Dorsolateral prefrontal cortex (tissue), 120 donors: ENCODE measurements at regions of chr15 and their contacts with region 1.

Region 1: GRCh38 chr15:98779463-98780071 is 131.2 kb downstream of the IGF1R start:
- DNase-seq: peak; percentile 60 to 83 (median 76)
- H3K4me3 ChIP-seq: peak overlapping the region in 2 of 59 donors; percentile 7 to 33
- H3K27ac ChIP-seq: peak overlapping the region in 48 of 59 donors; percentile 1 to 95 (median 62)
- H3K27me3 ChIP-seq: no peaks in the 10 kb centered on the region
- CTCF ChIP-seq: peak; percentile 60 to 97 (median 90)

Region 2: DNA sequence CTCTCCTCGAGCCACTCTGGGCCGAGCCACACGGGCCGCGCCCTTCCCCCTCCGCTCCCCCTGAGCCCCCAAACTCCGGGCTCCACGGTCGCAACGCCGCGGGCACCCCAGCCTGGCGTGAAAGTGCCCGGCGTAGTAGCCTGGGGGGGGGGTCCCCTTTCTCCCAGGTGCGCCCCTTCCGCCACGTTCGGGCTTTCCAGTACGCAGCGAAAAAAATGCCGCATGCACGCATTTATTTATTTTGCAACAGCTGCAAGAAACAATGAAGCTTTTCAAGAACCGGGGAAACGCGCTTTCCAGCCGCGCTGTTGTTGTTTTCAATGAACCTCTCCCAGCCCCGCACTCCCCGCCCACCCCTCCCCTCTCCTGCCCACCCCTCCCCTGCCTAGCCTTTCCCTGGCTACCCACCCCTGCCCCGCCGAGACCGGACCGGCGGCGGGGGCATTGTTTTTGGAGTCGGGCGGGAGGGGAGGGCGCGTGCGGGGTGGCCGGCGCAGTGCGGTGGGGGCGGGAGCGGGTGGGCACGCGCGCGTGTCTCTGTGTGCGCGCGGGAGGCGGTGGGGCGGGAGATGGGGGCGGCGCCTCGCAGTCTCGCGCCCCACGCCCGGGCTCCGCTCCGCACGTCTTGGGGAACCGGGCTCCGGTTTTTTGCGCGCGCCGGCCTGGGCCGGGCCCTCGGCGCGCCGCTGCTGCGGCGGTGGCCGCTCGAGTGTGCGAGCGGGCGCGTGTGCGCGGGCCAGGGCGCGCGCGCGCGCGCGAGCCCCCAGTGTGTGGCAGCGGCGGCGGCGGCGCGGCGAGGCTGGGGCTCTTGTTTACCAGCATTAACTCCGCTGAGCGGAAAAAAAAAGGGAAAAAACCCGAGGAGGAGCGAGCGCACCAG is 131.6 kb before region 1 on chr15 and contains the start of gene IGF1R:
- intact Hi-C with region 1: loop called in 1 of 2 experiments (anchors 5 kb)
- DNase-seq: peak; percentile 70 to 89 (median 78)
- H3K4me3 ChIP-seq: peak within 1 kb of the TSS; percentile 73 to 98 (median 85)
- H3K27ac ChIP-seq: peak within 1 kb of the TSS; percentile 81 to 99 (median 94)
- H3K27me3 ChIP-seq: no peaks in the 10 kb centered on the region
- CTCF ChIP-seq: peak in 17 of 56 donors; percentile 4 to 47 (median 13)
- total RNA-seq, gene IGF1R: 53.3 to 130 (median 84.4) TPM

Region 3: DNA sequence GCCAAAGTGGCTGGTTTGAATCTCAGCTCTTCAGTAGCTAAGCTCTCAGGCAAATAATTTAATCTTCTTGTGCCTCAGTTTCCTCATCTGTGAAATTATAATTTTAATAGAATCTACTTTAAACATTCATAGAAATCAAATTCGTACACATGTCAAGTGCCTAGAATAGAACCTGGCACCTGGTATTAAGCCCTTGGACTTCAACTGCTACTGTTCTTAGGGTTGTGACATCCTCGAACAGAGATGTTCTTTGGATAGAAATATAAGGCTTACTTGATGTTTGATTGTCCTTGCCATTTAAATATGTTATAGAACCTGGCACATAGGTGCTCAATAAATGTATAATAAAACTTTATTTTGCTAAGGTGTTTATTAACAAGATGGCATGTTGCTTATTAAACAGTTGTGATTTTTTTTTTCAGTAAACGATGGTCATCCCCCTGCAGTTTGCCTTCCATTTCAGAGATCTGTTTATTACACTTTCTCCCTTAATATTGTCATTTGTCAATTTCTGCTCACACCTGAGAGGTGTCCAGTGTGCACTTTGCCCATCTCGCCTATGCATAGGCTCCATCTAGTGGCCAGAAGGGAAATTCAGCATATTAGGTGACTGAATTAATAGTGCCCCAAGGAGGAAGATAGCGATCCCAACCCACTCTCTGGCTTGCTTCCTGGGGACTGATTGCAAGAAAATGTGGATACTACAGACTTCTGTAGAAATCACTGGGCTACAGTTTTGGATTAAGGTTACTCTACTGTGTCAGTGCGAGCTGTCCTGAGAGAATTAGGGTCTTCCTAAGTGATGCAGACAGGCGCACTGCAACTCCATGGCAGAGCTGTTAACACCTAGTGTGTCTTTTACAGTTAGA is 120.5 kb before region 1 on chr15:
- intact Hi-C with region 1: loop called in 1 of 2 experiments (anchors 5 kb)
- DNase-seq: peak in 1 of 10 donors; percentile 47
- H3K4me3 ChIP-seq: peak overlapping the region in 2 of 59 donors; percentile 5 to 23
- H3K27ac ChIP-seq: peak overlapping the region in 7 of 59 donors; percentile 6 to 58 (median 11)
- H3K27me3 ChIP-seq: no peaks in the 10 kb centered on the region
- CTCF ChIP-seq: peak; percentile 66 to 93 (median 78)

Region 4: DNA sequence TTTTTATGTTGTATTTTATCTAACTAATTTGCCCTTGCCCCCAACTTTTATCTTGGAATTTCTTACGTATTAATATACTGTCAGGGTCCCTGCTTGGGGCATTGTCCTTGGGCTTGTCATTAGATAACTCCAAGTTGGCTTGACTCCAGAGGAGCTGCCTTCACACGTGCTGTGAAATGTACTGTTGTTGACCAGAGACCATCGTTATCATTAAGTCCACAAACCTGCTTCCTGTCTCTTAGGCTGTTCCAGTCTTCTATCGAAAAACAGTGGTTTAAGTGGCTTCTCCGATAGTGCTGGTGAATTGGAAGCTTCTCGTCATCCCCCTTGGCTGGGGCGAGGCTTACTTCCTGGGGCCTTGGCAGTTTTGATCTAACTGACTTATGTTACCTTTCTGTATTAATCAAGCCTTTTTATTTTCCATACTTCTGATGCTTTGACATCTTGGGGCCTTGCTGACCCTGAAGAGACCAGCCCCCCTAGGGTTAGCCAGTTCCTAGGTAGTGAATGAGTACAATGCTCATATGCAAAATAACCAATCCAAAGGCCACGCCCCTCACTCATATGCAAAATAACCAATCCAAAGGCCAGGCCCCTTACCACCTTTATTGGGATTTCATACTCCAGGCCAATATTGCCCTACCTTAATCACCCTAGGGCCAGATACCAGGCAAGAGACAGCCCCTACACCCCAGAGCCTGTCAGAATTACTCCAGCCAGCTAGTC is 33.3 kb after region 1 on chr15:
- intact Hi-C with region 1: no loop called
- DNase-seq: no peak
- H3K4me3 ChIP-seq: no peak overlapping the region
- H3K27ac ChIP-seq: no peak overlapping the region
- H3K27me3 ChIP-seq: no peaks in the 10 kb centered on the region
- CTCF ChIP-seq: no peak

Region 5: GRCh38 chr15:100008258-100008657 is 1228.7 kb after region 1 on chr15:
- intact Hi-C with region 1: no loop called
- DNase-seq: no peak
- H3K4me3 ChIP-seq: no peak overlapping the region
- H3K27ac ChIP-seq: no peak overlapping the region
- H3K27me3 ChIP-seq: no peaks in the 10 kb centered on the region
- CTCF ChIP-seq: no peak